AG04450 (cell line): ENCODE measurements at regions of chr10 and their contacts with region 1.

Region 1: GRCh38 chr10:59625721-59626522 is 83.7 kb downstream of the SLC16A9 start:
- DNase-seq: peak; percentile 58
- H3K4me3 ChIP-seq: no peak overlapping the region
- H3K27ac ChIP-seq: no peak overlapping the region
- H3K27me3 ChIP-seq: no peaks in the 10 kb centered on the region
- CTCF ChIP-seq: peak; percentile 80

Region 2: DNA sequence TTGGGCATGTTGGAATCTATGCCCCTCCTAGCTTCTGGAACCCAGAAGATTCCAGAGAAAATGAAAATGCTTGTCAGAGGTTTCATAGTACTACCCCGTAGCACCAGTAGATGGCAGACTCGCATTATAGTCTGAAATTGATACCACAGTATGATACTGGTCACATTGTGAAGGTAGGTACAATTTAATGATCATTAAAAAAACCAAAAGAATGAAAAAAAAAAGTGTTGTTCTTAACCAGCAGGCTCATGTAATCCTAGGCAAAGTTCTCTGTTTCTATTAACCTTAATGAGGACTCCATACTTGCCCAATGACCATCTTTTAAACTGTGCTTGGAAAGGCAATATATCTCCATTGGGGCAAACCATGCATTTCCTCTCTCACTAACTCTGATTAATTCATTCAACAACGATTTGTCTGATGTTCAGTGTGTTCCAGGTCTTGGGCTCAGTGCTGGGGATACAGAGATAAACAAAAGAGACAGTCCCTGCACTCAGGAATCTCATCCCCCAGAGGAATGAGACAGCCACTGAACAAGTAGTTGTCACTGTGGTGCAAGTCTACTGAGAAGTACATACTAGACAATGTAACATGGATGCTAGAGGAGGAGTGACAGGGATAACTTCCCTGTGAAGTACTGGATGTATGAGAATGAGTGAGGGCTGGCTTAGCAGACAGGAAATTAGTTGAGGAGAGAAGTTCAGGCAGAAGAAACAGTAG is 673.0 kb before region 1 on chr10:
- CTCF ChIA-PET with region 1: interaction called, 37 read pairs
- POLR2A ChIA-PET with region 1: no interaction called
- DNase-seq: no peak
- H3K4me3 ChIP-seq: no peak overlapping the region
- H3K27ac ChIP-seq: no peak overlapping the region
- H3K27me3 ChIP-seq: peaks cover 3% of the 10 kb centered on the region
- CTCF ChIP-seq: peak; percentile 81

Region 3: GRCh38 chr10:59240582-59241183 is 385.2 kb before region 1 on chr10:
- CTCF ChIA-PET with region 1: interaction called, 35 read pairs
- POLR2A ChIA-PET with region 1: no interaction called
- DNase-seq: peak; percentile 21
- H3K4me3 ChIP-seq: no peak overlapping the region
- H3K27ac ChIP-seq: no peak overlapping the region
- H3K27me3 ChIP-seq: no peaks in the 10 kb centered on the region
- CTCF ChIP-seq: peak; percentile 54

Region 4: GRCh38 chr10:59611043-59611442 is 14.9 kb before region 1 on chr10:
- CTCF ChIA-PET with region 1: interaction called, 16 read pairs
- POLR2A ChIA-PET with region 1: no interaction called
- DNase-seq: no peak
- H3K4me3 ChIP-seq: no peak overlapping the region
- H3K27ac ChIP-seq: no peak overlapping the region
- H3K27me3 ChIP-seq: no peaks in the 10 kb centered on the region
- CTCF ChIP-seq: no peak

Region 5: DNA sequence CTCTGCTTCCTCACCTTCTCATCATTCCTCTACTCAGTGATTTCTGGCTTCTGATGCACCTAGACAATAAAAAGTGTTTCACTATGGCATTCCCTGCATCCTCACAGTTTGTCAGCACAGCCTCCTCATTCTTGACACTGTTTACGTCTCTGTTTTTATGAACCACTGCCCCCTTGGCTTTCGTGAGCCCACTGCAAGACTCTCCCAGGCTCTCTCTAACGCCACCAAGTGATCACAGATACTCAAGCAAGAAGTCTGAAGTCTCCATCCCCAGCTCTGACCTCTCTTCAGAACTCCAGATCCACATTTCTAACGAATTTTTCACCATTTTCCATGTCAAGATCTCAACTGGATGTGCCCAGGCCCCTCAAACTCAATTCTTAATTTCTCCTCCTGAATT is 74.8 kb after region 1 on chr10:
- CTCF ChIA-PET with region 1: no interaction called
- POLR2A ChIA-PET with region 1: no interaction called
- DNase-seq: no peak
- H3K4me3 ChIP-seq: no peak overlapping the region
- H3K27ac ChIP-seq: no peak overlapping the region
- H3K27me3 ChIP-seq: no peaks in the 10 kb centered on the region
- CTCF ChIP-seq: no peak

Region 6: GRCh38 chr10:59830601-59831259 is 204.8 kb after region 1 on chr10:
- CTCF ChIA-PET with region 1: interaction called, 52 read pairs
- POLR2A ChIA-PET with region 1: no interaction called
- DNase-seq: peak; percentile 20
- H3K4me3 ChIP-seq: no peak overlapping the region
- H3K27ac ChIP-seq: no peak overlapping the region
- H3K27me3 ChIP-seq: no peaks in the 10 kb centered on the region
- CTCF ChIP-seq: peak; percentile 91

Region 7: DNA sequence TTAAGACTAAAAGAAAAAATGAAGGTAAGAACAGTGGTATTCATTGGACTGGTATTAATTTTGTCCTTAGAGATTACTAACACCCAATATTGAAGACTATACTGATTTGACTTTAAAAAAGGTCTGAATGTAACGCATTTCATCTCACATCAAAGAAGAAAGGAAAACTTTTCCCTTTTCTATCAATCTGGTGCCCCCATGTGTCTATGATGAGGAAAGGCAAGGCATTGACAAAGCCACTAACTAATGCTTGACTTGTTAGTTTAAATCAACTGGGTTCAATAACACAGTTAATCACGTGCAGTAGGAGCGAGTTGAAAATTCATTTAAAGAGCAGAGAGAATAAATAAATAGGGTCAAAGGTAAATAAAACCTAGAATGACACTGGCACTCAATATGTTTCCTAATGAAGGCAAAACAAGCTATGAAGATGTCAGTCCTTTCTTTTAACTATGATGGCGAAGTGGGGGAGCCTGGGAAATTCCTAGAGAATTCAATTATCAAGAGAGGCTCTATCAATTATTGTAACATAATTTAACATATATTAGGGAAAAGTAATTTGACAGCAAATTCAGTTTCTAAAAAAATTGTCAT is 582.9 kb after region 1 on chr10:
- CTCF ChIA-PET with region 1: interaction called, 16 read pairs
- POLR2A ChIA-PET with region 1: no interaction called
- DNase-seq: peak; percentile 8
- H3K4me3 ChIP-seq: no peak overlapping the region
- H3K27ac ChIP-seq: no peak overlapping the region
- H3K27me3 ChIP-seq: no peaks in the 10 kb centered on the region
- CTCF ChIP-seq: peak; percentile 92

Region 8: DNA sequence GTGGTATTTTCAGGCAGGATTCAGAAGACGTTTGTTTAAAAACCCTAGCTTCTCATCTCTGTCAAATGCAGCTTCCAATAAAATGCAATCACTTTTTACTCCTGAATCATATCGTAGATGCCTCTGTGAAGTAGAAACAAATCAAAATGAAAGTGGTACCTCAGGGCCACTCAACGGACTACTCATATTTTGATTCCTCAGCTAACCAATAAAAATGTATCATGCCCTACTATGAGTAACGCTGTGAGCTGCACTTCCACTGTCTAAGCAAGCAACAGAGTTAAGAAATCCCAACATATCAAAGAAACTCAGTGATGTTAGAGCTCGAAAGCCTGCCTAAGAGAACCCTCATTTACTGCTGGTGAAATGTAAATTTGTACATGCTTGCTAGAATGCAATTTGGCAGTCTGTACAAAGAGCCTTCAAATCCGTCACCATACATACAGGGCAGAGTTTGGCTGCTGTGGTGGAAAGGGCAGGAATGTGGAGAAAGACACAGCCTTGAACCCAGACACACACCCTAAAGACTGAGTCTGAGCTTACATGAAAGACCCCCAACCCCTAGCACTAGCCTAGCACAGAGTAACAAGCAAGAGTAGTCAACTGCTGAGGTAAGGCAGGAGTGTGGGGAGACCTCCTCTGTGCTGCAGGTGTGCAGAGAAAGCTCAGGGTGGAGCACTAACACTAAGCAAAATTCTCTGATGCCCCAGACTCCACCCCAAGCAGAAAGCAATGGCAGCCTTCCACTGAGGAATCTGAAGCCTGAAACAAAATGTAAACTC is 612.2 kb after region 1 on chr10:
- CTCF ChIA-PET with region 1: no interaction called
- POLR2A ChIA-PET with region 1: no interaction called
- DNase-seq: peak; percentile 30
- H3K4me3 ChIP-seq: peak overlapping the region; percentile 21
- H3K27ac ChIP-seq: no peak overlapping the region
- H3K27me3 ChIP-seq: no peaks in the 10 kb centered on the region
- CTCF ChIP-seq: peak; percentile 63